ENCODE measurements at regions of chrX and their contacts with region 1.

Region 1: GRCh38 chrX:16123222-16123786 is at the start of gene GRPR:
- DNase-seq: peak; percentile 79
- H3K4me3 Mint-ChIP-seq: no peak within 1 kb of the TSS
- H3K27ac Mint-ChIP-seq: peak within 1 kb of the TSS; percentile 56
- H3K4me1 Mint-ChIP-seq: peaks cover 28% of the 10 kb centered on the region
- H3K27me3 Mint-ChIP-seq: no peaks in the 10 kb centered on the region
- CTCF ChIP-seq: peak; percentile 43
- total RNA-seq, gene GRPR: 0.32 and 0.85 TPM in 2 replicates

Region 2: DNA sequence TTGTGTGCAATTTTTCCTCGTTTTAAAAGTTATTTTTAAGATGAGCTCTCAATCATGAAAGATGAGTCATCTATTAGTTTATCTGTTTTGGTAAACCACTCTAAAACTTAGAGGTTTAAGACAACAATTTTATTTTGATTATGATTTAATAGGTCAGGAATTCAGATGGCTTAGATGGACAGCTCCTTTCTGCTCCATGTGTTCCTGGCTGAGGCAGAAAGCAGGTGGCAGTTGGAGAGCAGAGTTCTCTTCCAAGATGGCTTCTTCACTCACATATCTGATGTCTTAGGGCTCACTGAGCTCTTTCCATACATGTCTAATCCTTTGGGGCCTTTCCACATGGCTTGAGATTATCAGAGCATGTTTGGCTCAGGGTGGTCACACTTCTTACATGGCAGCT is 48.2 kb before region 1 on chrX:
- CTCF ChIA-PET with region 1: no interaction called
- intact Hi-C with region 1: no loop called
- DNase-seq: no peak
- H3K4me3 Mint-ChIP-seq: no peak overlapping the region
- H3K27ac Mint-ChIP-seq: no peak overlapping the region
- H3K4me1 Mint-ChIP-seq: no peaks in the 10 kb centered on the region
- H3K27me3 Mint-ChIP-seq: no peaks in the 10 kb centered on the region
- CTCF ChIP-seq: no peak

Region 3: DNA sequence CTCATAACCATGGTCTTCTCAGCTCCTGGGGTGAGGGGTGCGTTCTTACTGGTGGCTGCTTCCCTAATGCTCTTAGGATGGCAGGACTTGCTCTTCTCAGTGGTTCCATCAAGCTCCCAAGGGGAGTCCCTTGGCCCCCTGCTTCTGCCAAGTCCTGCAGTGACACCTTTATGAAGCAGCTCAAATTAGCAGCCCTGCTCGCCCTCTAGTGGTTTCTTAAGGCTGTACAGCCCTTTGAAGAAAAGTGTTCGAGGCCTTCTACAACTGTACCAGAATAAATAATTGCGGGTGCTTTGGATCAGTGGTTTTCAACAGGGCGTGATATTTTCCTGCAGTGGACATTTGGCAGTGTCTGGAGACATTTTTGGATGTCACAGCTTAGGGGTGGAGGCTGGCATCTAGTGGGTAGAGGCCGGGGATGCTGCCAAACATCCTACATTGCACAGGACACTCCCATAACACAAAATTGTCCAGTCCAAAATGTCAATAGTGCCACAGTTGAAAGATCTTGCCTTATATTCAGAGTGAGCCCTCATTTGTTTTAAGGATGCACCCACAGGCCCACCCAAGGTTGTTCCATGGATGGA is 322.0 kb after region 1 on chrX:
- CTCF ChIA-PET with region 1: interaction called, 5 read pairs
- intact Hi-C with region 1: loop called (anchors 2 kb)
- DNase-seq: peak; percentile 32
- H3K4me3 Mint-ChIP-seq: no peak overlapping the region
- H3K27ac Mint-ChIP-seq: no peak overlapping the region
- H3K4me1 Mint-ChIP-seq: no peaks in the 10 kb centered on the region
- H3K27me3 Mint-ChIP-seq: no peaks in the 10 kb centered on the region
- CTCF ChIP-seq: peak; percentile 70

Measured in Calu3 (cell line).